ENCODE measurements at regions of chr17 and their contacts with region 1.

Region 1: DNA sequence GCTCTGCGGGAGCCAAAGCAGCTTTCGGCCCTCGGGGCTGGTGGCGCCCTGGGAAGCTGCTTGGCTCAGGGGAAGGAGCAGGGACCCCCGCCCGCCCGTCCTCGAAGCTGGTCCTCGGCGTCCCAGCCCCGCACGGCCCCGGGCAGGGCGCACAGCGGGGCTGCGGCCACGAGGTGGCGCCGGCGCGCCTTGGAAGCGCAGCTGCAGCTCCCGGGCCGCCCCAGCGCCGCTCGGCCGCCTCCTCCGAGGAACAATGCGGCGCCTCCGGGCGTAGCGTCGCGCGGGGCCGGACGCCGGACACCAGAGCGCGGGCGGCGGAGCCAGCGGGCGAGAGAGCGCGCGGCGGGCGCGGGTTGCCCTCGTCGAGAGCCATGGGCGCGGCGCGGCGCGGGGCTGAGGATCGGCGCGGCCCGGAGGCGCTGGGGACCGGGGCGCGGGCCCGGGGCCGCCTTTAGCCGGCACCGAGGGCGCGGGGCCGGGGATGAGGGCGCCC is at the start of gene MGAT5B:
- DNase-seq: no peak
- H3K4me3 ChIP-seq: peak within 1 kb of the TSS; percentile 36
- CTCF ChIP-seq: peak; percentile 62

Region 2: GRCh38 chr17:76121932-76122430 is 746.2 kb before region 1 on chr17:
- CTCF ChIA-PET with region 1: no interaction called
- POLR2A ChIA-PET with region 1: no interaction called
- DNase-seq: no peak
- H3K4me3 ChIP-seq: peak overlapping the region; percentile 23
- CTCF ChIP-seq: no peak

Region 3: GRCh38 chr17:76753061-76753961 is 114.9 kb before region 1 on chr17:
- CTCF ChIA-PET with region 1: no interaction called
- POLR2A ChIA-PET with region 1: no interaction called
- DNase-seq: no peak
- H3K4me3 ChIP-seq: no peak overlapping the region
- CTCF ChIP-seq: no peak

Region 4: GRCh38 chr17:76845541-76846017 is 22.6 kb before region 1 on chr17:
- CTCF ChIA-PET with region 1: interaction called, 17 read pairs
- POLR2A ChIA-PET with region 1: no interaction called
- DNase-seq: no peak
- H3K4me3 ChIP-seq: no peak overlapping the region
- CTCF ChIP-seq: no peak

Region 5: DNA sequence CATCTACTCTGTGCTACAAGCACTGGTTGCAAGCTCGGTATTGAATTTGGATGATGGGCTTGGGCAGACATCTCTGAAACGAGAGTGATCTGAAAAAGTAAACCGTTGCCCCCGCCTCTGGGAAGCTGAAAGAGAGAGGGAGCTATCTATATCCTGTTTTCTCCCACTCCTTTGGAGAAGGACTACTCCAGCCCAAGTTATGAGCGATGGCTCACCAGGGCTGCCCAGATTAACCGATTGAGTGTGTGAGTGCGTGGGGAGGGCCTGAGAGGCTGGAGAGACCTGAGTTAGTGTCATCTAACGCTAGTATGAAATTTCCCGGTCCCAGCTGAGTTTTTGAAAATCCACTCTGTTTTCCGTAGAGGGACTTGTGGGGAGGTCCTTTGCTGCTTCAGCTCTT is 11.5 kb after region 1 on chr17:
- CTCF ChIA-PET with region 1: interaction called, 28 read pairs
- POLR2A ChIA-PET with region 1: no interaction called
- DNase-seq: no peak
- H3K4me3 ChIP-seq: no peak overlapping the region
- CTCF ChIP-seq: no peak

Region 6: DNA sequence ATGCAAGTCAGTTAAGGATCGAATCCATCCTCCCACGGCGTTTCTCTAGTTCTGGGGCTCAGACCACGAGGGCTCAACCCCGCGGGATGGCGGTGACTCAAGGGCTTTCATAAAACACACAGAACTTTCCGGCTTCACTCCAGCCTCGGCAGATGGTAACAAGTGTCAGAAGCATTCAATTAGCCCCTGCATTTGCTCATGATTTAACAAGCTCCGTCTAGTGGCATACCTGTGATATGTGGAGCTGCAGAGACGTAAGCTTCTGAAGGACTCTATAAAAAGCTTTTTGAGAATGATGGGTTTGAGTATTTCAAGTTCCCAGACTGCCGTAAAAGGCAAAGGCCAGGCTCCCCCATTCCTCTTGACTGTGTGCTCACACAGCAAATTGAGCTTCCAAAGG is 181.2 kb after region 1 on chr17:
- CTCF ChIA-PET with region 1: interaction called, 541 read pairs
- POLR2A ChIA-PET with region 1: no interaction called
- DNase-seq: no peak
- H3K4me3 ChIP-seq: no peak overlapping the region
- CTCF ChIP-seq: no peak